RWPE1 (cell line): ENCODE measurements at regions of chrX and their contacts with region 1.

Region 1: GRCh38 chrX:133335027-133335426 is 80.3 kb downstream of the GPC4 start:
- DNase-seq: peak; percentile 4
- H3K27ac ChIP-seq: no peak overlapping the region
- CTCF ChIP-seq: peak; percentile 29; the same call in 1 of the 2 replicates

Region 2: DNA sequence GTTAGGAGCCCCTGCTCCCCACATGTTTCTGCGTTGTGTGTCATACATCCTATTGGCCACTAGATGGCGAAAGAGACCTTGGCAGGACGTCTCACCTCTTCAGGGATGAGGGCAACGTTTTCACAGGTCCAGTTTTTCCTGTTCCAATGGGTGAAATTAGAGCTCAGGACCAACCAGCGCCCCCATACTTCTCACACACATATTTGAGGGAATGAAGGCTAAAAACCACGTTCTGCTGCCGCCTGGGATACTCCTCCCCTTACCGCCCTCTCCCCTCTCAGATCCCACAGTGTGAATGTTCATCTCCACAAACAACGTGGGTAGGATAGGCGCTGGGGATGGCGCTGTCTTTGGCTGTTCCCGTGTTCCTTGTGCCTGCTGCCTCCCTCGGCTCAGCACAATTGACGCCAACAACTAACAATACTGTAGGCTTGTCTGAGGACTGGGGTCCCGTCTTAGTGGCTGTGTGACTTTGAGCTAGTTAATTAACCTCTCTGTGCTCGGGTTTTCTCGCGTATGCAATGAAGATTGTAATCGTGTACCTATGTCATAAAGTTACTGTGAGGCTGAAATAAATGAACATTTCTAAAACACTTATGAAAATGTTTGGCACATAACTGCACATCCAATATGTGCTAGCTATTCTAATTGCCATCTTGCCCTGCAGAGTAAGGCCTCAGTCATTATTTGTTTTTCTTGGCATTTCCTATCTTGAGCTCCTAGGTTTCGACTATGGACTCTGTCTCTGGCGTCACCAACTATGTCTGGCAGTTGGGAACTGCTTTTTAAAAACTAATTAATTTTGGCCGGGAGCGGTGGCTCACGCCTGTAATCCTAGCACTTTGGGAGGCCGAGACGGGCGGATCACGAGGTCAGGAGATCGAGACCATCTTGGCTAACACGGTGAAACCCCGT is 1493.3 kb before region 1 on chrX:
- CTCF ChIA-PET with region 1: interaction called, 10 read pairs
- POLR2A ChIA-PET with region 1: no interaction called
- DNase-seq: peak; percentile 49
- H3K27ac ChIP-seq: no peak overlapping the region
- CTCF ChIP-seq: peak; percentile 69

Region 3: GRCh38 chrX:133159205-133159604 is 175.8 kb before region 1 on chrX:
- CTCF ChIA-PET with region 1: no interaction called
- POLR2A ChIA-PET with region 1: no interaction called
- DNase-seq: no peak
- H3K27ac ChIP-seq: no peak overlapping the region
- CTCF ChIP-seq: no peak

Region 4: DNA sequence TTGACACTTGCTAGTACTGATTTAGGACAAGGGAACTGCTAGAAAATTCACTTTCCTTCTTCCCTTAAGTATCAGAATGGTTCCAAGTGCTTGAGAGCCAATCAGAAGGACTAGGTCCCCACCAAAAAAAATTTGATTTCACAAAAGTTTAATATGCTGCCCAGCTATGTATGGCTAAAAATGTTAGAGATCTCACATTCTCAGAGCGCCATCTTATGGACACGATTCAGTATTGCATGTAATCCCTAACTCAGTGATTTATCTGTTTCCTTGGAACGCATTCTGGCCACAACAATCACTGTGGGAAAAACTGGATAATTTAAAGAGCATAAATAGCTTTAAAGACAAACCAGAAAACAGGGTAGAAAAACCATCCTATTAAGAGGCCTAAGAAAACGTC is 335.4 kb after region 1 on chrX:
- CTCF ChIA-PET with region 1: interaction called, 13 read pairs
- POLR2A ChIA-PET with region 1: no interaction called
- DNase-seq: peak; percentile 34
- H3K27ac ChIP-seq: no peak overlapping the region
- CTCF ChIP-seq: peak; percentile 57